ENCODE measurements at regions of chr11 and their contacts with region 1.

Region 1: GRCh38 chr11:56122073-56122472 is at the start of gene OR8H3:
- DNase-seq: no peak
- H3K4me3 ChIP-seq: no peak within 1 kb of the TSS
- H3K27ac ChIP-seq: no peak within 1 kb of the TSS
- H3K4me1 ChIP-seq: no peaks in the 10 kb centered on the region
- H3K27me3 ChIP-seq: no peaks in the 10 kb centered on the region
- CTCF ChIP-seq: no peak
- EP300 ChIP-seq: no peak
- POLR2A ChIP-seq: no peak
- total RNA-seq, gene OR8H3: not detected

Region 2: GRCh38 chr11:55806248-55806647 is 315.8 kb before region 1 on chr11:
- intact Hi-C with region 1: loop called in 1 of 4 experiments (anchors 5 kb)
- DNase-seq: no peak
- H3K4me3 ChIP-seq: no peak overlapping the region
- H3K27ac ChIP-seq: no peak overlapping the region
- H3K4me1 ChIP-seq: no peaks in the 10 kb centered on the region
- H3K27me3 ChIP-seq: no peaks in the 10 kb centered on the region
- CTCF ChIP-seq: no peak
- EP300 ChIP-seq: no peak
- POLR2A ChIP-seq: no peak

Region 3: GRCh38 chr11:56410801-56411200 is 288.7 kb after region 1 on chr11:
- intact Hi-C with region 1: no loop called
- DNase-seq: no peak
- H3K4me3 ChIP-seq: no peak overlapping the region
- H3K27ac ChIP-seq: no peak overlapping the region
- H3K4me1 ChIP-seq: no peaks in the 10 kb centered on the region
- H3K27me3 ChIP-seq: no peaks in the 10 kb centered on the region
- CTCF ChIP-seq: no peak
- EP300 ChIP-seq: no peak
- POLR2A ChIP-seq: no peak